ENCODE measurements at regions of chr15 and their contacts with region 1.

Region 1: GRCh38 chr15:74768771-74769342 is 13.0 kb upstream of the CSK start:
- DNase-seq: peak; percentile 68
- H3K4me3 ChIP-seq: no peak overlapping the region
- H3K27ac ChIP-seq: no peak overlapping the region
- H3K4me1 ChIP-seq: peaks cover 40% of the 10 kb centered on the region
- CTCF ChIP-seq: peak; percentile 94

Region 2: GRCh38 chr15:74373731-74374647 is 394.9 kb before region 1 on chr15:
- CTCF ChIA-PET with region 1: no interaction called
- POLR2A ChIA-PET with region 1: interaction called, 7 read pairs
- intact Hi-C with region 1: loop called (anchors 10 kb)
- DNase-seq: peak; percentile 92
- H3K4me3 ChIP-seq: peak overlapping the region; percentile 71
- H3K27ac ChIP-seq: peak overlapping the region; percentile 47
- H3K4me1 ChIP-seq: peaks cover 15% of the 10 kb centered on the region
- CTCF ChIP-seq: peak; percentile 92

Region 3: DNA sequence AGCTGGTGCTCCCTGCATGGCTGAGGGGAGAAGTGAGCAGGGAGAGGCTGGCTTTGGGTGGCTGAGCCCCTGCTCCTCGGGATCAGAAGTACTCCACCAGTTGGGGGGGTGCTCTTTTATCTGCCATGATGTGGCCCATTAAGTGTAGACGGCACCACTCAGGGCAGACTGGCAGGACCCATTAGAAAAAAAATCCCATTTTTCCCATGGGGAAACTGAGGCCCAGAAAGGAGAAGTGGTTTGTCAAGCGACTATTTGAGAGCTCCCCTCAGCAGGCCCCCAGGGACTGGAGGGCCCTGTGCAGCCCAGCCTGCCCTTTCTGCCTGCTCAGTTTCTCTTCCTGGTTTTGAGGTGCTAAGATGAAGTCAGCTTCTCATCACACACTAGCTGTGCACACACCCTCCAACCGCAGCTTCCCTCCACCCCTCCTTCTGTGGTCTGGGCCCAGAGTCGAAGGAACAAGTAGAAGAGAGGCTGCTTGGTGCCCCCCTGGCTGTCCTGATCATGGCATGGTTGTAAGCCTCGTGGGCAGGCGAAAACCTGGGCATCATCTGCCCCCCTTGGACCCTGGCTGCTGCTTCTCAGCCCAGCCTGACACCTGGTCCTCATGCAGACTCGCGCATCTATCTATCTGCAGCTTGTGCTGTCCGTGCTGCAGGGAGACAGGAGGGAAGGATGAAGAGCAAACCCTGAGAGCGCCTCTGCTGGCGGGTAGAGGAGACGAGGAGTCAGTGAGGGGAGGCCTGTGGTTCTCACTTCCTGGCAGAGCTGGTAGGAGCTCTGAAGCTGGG is 18.6 kb after region 1 on chr15:
- CTCF ChIA-PET with region 1: interaction called, 14 read pairs
- POLR2A ChIA-PET with region 1: interaction called, 221 read pairs
- intact Hi-C with region 1: no loop called
- DNase-seq: peak; percentile 97
- H3K4me3 ChIP-seq: peak overlapping the region; percentile 97
- H3K27ac ChIP-seq: peak overlapping the region; percentile 99
- H3K4me1 ChIP-seq: peaks cover 86% of the 10 kb centered on the region
- CTCF ChIP-seq: peak; percentile 91

Region 4: GRCh38 chr15:74799856-74800547 is 31.1 kb after region 1 on chr15:
- CTCF ChIA-PET with region 1: interaction called, 4 read pairs
- POLR2A ChIA-PET with region 1: interaction called, 5 read pairs
- intact Hi-C with region 1: loop called (anchors 1 kb)
- DNase-seq: peak; percentile 77
- H3K4me3 ChIP-seq: no peak overlapping the region
- H3K27ac ChIP-seq: peak overlapping the region; percentile 61
- H3K4me1 ChIP-seq: peaks cover 55% of the 10 kb centered on the region
- CTCF ChIP-seq: peak; percentile 88

Region 5: GRCh38 chr15:74842581-74843444 is 74.0 kb after region 1 on chr15 and contains the start of gene ULK3:
- CTCF ChIA-PET with region 1: no interaction called
- POLR2A ChIA-PET with region 1: interaction called, 3 read pairs
- intact Hi-C with region 1: loop called (anchors 2 kb)
- DNase-seq: peak; percentile 91
- H3K4me3 ChIP-seq: peak within 1 kb of the TSS; percentile 73
- H3K27ac ChIP-seq: peak within 1 kb of the TSS; percentile 47
- H3K4me1 ChIP-seq: peaks cover 35% of the 10 kb centered on the region
- CTCF ChIP-seq: peak; percentile 68
- total RNA-seq, gene ULK3: 22.2 and 31.7 TPM in 2 replicates

Region 6: DNA sequence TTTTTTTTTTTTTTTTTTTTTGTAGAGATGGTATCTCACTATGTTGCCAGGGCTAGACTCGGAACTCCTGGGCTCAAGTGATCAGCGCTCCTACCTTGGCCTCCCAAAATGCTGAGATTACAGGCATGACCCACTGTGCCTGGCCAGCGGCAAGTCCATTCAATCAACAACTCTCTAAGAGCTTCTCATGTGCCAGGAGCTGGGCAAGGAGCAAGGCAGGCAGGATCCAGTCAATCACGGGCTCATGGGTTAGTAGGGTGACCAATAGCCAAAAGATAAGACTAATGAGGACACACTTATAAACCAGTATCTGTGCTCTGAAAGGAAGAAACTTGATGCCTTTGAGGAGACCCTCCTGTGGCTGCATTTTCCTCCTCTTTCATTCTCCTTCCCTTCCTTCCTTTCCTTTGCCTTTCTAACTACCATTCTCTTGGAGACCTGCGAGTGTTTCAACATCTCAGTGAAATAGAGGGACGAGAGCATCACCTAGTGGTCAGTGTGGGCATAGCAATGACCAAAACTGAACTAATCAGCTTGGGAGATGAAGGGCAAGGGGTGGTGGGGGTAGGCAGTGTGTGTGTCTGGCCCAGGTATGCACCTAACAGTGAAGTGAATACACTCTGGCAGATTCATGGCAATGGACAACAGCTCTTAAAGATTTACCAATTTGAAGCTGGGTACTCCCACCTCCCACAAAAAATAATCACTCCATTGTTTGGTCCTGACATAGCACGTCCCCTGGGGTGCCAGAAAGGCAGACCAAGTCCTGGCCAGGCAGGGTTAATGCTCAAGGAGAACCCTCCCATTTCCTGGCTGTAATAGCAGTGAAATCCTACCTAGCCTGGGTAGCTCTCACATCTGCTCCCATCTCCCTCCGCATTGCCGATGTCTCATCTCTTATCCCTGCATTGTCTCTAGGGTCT is 181.5 kb after region 1 on chr15:
- CTCF ChIA-PET with region 1: no interaction called
- POLR2A ChIA-PET with region 1: no interaction called
- intact Hi-C with region 1: loop called (anchors 1 kb)
- DNase-seq: peak; percentile 80
- H3K4me3 ChIP-seq: no peak overlapping the region
- H3K27ac ChIP-seq: no peak overlapping the region
- H3K4me1 ChIP-seq: peaks cover 22% of the 10 kb centered on the region
- CTCF ChIP-seq: peak; percentile 99

Region 7: GRCh38 chr15:74988007-74988800 is 219.3 kb after region 1 on chr15:
- CTCF ChIA-PET with region 1: no interaction called
- POLR2A ChIA-PET with region 1: no interaction called
- intact Hi-C with region 1: no loop called
- DNase-seq: peak; percentile 66
- H3K4me3 ChIP-seq: no peak overlapping the region
- H3K27ac ChIP-seq: no peak overlapping the region
- H3K4me1 ChIP-seq: peaks cover 10% of the 10 kb centered on the region
- CTCF ChIP-seq: peak; percentile 83

Region 8: DNA sequence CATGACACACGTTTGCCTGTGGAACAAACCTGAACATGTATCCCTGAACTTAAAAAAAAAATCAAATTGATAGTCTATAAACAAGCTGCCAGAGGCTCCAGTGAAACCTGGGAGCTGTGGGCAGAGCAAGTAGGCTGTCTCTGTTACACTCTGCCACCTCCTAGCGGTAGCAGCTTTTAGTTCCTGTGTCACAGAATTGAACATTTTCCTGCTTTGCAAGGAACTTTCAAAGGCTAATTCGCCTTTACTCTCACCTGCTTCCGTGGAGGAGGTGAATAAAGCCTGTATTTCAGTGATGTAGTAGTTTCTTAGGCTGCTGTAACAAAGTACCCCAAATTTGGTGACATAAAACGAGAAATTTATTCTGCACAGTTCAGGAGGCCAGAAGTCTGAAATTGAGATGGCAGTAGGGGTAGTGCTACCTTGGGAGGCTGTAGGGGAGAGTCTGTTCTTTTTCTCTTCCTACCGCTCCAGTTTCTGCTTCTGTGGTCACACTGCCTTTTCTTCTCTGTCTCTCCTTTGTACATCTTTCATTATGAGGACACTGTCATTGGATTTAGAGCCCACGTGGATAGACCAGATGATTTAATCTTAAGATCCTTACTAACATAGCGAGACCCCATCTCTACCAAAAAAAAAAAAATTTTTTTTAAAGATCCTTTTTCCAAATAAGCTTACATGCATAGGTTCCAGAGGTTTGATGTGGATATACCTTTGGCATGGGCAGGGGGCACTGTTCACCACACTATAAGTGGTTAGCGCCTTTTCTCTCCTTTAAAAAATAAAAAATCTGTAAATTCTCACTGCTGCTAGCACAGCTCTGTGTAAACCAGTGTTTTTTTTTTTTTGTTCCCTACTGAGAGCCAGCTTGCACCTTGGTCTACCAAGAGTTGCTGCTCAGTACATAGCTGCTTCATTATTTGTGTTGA is 1160.1 kb after region 1 on chr15:
- CTCF ChIA-PET with region 1: no interaction called
- POLR2A ChIA-PET with region 1: no interaction called
- intact Hi-C with region 1: no loop called
- DNase-seq: peak; percentile 63
- H3K4me3 ChIP-seq: no peak overlapping the region
- H3K27ac ChIP-seq: no peak overlapping the region
- H3K4me1 ChIP-seq: peaks cover 6% of the 10 kb centered on the region
- CTCF ChIP-seq: peak; percentile 83